ENCODE measurements at regions of chr12 and their contacts with region 1.

Region 1: DNA sequence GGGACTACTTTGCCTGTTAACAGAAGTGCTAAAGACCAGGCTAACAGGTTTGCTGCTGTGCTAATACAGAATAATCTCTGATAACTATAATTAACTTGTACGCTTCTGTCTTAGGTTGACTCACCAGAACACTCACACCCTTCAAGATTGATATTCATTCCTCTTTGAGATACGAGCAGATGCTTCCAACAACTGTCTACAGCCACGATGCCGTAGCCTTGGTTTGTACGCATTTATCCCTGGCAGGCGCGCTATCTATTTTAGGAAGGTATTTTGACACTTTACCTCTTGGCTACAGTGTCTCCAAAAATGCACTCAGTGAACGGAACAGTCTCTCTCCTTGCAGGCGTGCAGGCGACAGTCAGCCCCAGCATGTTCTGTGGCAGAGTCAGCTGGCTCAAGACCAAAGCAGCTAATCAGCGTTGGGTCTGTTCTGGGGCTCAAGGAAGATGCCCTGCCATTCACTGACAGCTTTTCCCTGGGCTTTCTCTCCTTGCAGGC is 146.4 kb upstream of the PRICKLE1 start:
- DNase-seq: peak; percentile 68 to 84 (median 84)
- ATAC-seq: peak; percentile 94
- H3K4me3 ChIP-seq: peak overlapping the region; percentile 22
- H3K27ac ChIP-seq: peak overlapping the region; percentile 57
- H3K4me1 ChIP-seq: peaks cover 2% of the 10 kb centered on the region
- H3K27me3 ChIP-seq: no peaks in the 10 kb centered on the region

Region 2: DNA sequence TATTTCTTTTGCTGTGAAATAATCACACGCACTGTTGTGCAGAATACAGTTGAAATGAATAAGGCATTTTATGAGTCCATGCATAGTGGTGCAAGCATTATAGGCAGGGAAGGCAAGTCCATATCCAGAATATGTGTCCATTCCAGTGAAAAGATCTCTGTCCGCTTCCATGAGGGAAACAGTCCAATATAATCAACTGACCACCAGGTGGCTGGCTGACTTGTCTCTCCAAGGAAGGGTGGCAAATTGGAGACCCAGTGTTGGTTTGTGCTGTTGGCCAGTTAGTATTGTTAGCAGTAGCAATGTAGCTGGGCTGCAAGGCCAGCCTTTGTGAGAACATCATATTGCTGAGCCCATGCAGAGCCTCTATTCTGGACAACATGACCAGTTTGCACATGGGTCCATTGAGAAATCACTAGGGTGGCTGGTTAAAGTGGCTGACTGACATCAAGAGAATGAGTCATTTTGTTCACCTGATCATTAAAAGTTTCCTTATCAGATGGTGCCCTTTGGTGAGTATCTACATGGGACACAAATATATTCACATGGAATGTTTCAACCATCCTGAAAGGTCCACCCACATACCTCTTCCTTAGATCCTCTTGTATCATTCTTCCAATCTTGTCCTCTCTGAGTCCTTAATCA is 480.6 kb before region 1 on chr12:
- intact Hi-C with region 1: no loop called
- DNase-seq: no peak
- ATAC-seq: no peak
- H3K4me3 ChIP-seq: no peak overlapping the region
- H3K27ac ChIP-seq: no peak overlapping the region
- H3K4me1 ChIP-seq: no peaks in the 10 kb centered on the region
- H3K27me3 ChIP-seq: no peaks in the 10 kb centered on the region

Region 3: GRCh38 chr12:42790761-42791151 is 54.8 kb after region 1 on chr12:
- intact Hi-C with region 1: loop called in 1 of 4 experiments (anchors 10 kb)
- DNase-seq: peak in 1 of 3 donors; percentile 17
- ATAC-seq: peak; percentile 47 to 83
- H3K4me3 ChIP-seq: no peak overlapping the region
- H3K27ac ChIP-seq: no peak overlapping the region
- H3K4me1 ChIP-seq: peaks cover 7% of the 10 kb centered on the region
- H3K27me3 ChIP-seq: no peaks in the 10 kb centered on the region